ENCODE measurements at regions of chr15 and their contacts with region 1.

Region 1: GRCh38 chr15:27358751-27359434 is 387.9 kb downstream of the GABRG3 start:
- DNase-seq: peak; percentile 27 to 36
- H3K4me3 ChIP-seq: no peak overlapping the region
- H3K27ac ChIP-seq: no peak overlapping the region
- H3K4me1 ChIP-seq: peaks cover 0 to 3% of the 10 kb centered on the region in 2 donors
- H3K27me3 ChIP-seq: no peaks in the 10 kb centered on the region
- CTCF ChIP-seq: peak in 5 of 6 experiments; percentile 49 to 94 (median 82)
- POLR2A ChIP-seq: no peak

Region 2: GRCh38 chr15:27059610-27060202 is 299.2 kb before region 1 on chr15:
- intact Hi-C with region 1: loop called (anchors 5 kb)
- DNase-seq: peak; percentile 53 to 61
- H3K4me3 ChIP-seq: no peak overlapping the region
- H3K27ac ChIP-seq: no peak overlapping the region
- H3K4me1 ChIP-seq: no peaks in the 10 kb centered on the region
- H3K27me3 ChIP-seq: no peaks in the 10 kb centered on the region
- CTCF ChIP-seq: peak in 5 of 6 experiments; percentile 34 to 63 (median 61)
- POLR2A ChIP-seq: no peak

Region 3: GRCh38 chr15:27238209-27238608 is 120.7 kb before region 1 on chr15:
- intact Hi-C with region 1: no loop called
- DNase-seq: no peak
- H3K4me3 ChIP-seq: no peak overlapping the region
- H3K27ac ChIP-seq: no peak overlapping the region
- H3K4me1 ChIP-seq: no peaks in the 10 kb centered on the region
- H3K27me3 ChIP-seq: no peaks in the 10 kb centered on the region
- CTCF ChIP-seq: no peak
- POLR2A ChIP-seq: no peak

Region 4: DNA sequence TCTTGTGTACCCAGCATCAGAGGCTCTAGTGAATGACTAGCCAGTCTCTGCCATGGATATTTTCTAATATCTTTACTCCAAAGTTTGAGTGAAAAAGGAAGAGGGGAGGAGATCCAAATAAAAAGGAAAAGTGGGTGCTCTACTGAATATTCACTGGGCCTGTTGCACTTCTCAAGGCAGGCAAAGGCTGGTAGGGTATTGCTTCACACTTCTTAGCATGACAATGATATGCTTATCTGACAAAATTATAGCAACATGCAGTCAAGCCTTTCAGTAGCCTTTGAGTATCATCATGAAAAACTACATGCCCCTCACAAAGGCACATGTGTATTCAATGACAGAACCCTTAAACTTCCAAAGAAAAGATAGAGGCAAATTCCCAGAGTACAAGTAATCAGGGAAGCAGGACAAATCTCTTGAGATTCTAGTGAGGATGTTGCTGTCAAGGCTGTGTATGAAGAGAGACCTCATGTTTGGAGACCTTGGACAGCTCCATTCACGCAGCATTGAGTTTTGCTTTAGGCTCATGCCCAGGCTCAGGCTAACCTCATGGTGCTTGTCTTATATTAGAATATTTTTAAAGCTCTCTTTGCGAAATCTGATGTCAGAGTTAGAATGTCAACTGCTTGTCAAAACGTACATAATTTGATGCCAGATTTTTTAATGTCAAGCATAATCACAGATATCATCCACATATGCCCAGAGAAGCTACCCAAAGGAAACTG is 233.3 kb after region 1 on chr15:
- intact Hi-C with region 1: no loop called
- DNase-seq: no peak
- H3K4me3 ChIP-seq: no peak overlapping the region
- H3K27ac ChIP-seq: no peak overlapping the region
- H3K4me1 ChIP-seq: no peaks in the 10 kb centered on the region
- H3K27me3 ChIP-seq: no peaks in the 10 kb centered on the region
- CTCF ChIP-seq: no peak
- POLR2A ChIP-seq: no peak

Measured in thyroid gland (tissue), 4 donors.